MCF 10A (cell line): ENCODE measurements at regions of chr5 and their contacts with region 1.

Region 1: DNA sequence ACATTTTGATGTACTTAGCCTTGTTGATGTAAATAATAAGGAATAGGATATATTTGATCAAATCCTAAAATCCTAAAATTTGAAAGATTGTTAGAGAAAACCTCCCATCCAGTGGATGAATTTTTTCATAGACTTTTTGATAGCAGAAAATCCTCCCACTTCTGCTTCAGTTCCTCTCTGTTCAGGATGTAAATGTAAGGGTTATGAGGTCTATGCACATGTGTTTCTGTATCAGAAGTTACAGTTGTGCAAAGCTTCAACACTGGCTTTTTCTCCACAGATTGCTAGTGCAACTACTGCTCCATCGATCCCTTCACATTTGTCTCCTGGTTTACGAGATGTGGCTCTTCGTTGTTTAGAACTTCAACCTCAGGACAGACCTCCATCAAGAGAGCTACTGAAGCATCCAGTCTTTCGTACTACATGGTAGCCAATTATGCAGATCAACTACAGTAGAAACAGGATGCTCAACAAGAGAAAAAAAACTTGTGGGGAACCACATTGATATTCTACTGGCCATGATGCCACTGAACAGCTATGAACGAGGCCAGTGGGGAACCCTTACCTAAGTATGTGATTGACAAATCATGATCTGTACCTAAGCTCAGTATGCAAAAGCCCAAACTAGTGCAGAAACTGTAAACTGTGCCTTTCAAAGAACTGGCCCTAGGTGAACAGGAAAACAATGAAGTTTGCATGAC is 16.0 kb upstream of the SETD9 start:
- DNase-seq: no peak
- H3K4me3 Mint-ChIP-seq: no peak overlapping the region
- H3K27ac Mint-ChIP-seq: no peak overlapping the region
- H3K4me1 Mint-ChIP-seq: no peaks in the 10 kb centered on the region
- H3K27me3 Mint-ChIP-seq: no peaks in the 10 kb centered on the region
- CTCF ChIP-seq: no peak

Region 2: DNA sequence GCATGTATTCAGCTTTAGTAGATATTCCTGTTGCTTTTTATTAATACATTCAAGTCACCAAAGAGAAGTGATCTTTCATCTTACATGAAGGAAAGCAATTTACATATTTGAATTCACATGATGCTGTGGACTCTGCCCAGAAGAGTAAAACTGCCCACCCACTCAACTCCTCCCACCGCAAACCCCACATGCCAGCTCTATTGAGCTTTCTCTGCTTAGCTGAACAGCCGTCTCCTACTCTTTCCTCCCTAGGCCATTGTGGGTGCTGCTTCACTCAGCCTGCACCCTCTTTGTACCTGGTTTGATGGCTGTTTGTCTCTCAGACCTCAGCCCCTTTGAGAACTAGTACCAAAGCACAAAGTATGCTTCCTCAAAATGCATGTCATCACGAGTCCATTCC is 126.5 kb before region 1 on chr5:
- CTCF ChIA-PET with region 1: no interaction called
- POLR2A ChIA-PET with region 1: no interaction called
- intact Hi-C with region 1: loop called (anchors 5 kb)
- DNase-seq: no peak
- H3K4me3 Mint-ChIP-seq: no peak overlapping the region
- H3K27ac Mint-ChIP-seq: no peak overlapping the region
- H3K4me1 Mint-ChIP-seq: peaks cover 12% of the 10 kb centered on the region
- H3K27me3 Mint-ChIP-seq: no peaks in the 10 kb centered on the region
- CTCF ChIP-seq: no peak